GM10248 (cell line): ENCODE measurements at regions of chr9 and their contacts with region 1.

Region 1: GRCh38 chr9:112002131-112002846 is 105.7 kb downstream of the UGCG start:
- DNase-seq: no peak
- CTCF ChIP-seq: no peak

Region 2: DNA sequence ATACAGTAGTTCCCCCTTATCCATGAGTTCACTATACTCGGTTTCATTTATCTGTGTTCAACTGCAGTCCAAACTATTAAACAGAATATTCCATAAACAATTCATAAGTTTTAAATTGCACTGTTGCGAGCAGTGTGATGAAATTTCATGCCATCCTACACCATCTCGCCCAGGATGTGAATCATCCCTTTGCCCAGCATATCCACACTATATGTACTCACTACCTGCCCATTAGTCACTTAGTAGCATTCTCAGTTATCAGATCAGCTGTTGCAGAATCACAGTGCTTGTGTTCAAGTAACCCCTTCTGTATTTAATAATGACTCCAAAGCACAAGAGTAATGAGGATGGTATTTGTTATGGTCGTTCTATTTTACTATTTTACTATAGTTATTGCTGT is 259.0 kb before region 1 on chr9:
- CTCF ChIA-PET with region 1: no interaction called
- POLR2A ChIA-PET with region 1: no interaction called
- DNase-seq: no peak
- CTCF ChIP-seq: no peak

Region 3: DNA sequence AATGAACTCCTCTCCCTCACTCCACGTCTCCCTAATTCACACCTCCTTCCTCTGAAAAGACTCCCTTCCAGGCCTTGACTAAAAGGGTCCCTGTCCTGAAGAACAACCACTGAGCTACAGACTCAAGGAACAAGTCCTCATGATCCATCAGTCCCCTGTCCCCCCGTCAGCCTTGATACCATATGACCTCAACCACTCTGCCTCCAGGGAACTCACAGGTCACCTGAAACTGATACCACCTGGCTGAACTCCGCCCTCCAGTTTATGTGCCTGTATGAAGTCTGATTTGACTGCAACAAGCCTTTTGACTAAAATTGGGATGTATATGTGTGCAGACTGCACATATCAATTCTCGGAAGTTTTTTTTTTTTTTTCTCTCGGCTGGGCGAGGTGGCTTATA is 17.0 kb before region 1 on chr9:
- CTCF ChIA-PET with region 1: interaction called, 14 read pairs
- POLR2A ChIA-PET with region 1: no interaction called
- DNase-seq: no peak
- CTCF ChIP-seq: no peak

Region 4: GRCh38 chr9:112027919-112028279 is 25.6 kb after region 1 on chr9:
- CTCF ChIA-PET with region 1: no interaction called
- POLR2A ChIA-PET with region 1: no interaction called
- DNase-seq: no peak
- CTCF ChIP-seq: no peak